Endothelial cell of umbilical vein (primary cell): ENCODE measurements at regions of chr2 and their contacts with region 1.

Region 1: DNA sequence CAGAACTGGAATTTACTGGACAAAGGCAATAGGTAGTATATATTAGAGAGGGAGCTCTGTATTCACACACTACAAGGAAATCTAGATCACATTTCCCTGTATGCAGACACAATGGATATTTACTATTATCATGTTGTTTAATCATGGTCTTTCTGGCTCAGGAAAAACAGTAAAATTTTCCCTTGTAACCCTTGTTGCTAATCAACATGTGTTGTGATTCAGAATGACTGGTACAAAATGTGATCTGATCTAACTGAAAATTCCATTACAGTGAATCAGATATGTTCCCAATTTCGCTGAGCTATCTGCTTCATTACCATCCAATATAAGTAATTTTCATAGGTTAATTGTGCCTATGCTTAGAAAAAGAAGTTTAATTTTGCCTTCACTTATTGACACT is 1109.7 kb downstream of the LRP1B start:
- DNase-seq: peak; percentile 88
- H3K4me3 ChIP-seq: no peak overlapping the region
- H3K27ac ChIP-seq: peak overlapping the region; percentile 90
- H3K4me1 ChIP-seq: peaks cover 29% of the 10 kb centered on the region
- H3K27me3 ChIP-seq: no peaks in the 10 kb centered on the region
- CTCF ChIP-seq: no peak
- POLR2A ChIP-seq: no peak

Region 2: GRCh38 chr2:140657657-140658056 is 363.5 kb before region 1 on chr2:
- CTCF ChIA-PET with region 1: no interaction called
- POLR2A ChIA-PET with region 1: no interaction called
- dilution Hi-C with region 1: no loop called
- intact Hi-C with region 1: loop called (anchors 1 kb)
- DNase-seq: peak; percentile 68
- H3K4me3 ChIP-seq: no peak overlapping the region
- H3K27ac ChIP-seq: peak overlapping the region; percentile 48
- H3K4me1 ChIP-seq: peaks cover 21% of the 10 kb centered on the region
- H3K27me3 ChIP-seq: no peaks in the 10 kb centered on the region
- CTCF ChIP-seq: no peak
- POLR2A ChIP-seq: peak; percentile 21

Region 3: GRCh38 chr2:140998017-140998416 is 23.1 kb before region 1 on chr2:
- CTCF ChIA-PET with region 1: no interaction called
- POLR2A ChIA-PET with region 1: no interaction called
- dilution Hi-C with region 1: no loop called
- intact Hi-C with region 1: no loop called
- DNase-seq: no peak
- H3K4me3 ChIP-seq: no peak overlapping the region
- H3K27ac ChIP-seq: no peak overlapping the region
- H3K4me1 ChIP-seq: no peaks in the 10 kb centered on the region
- H3K27me3 ChIP-seq: no peaks in the 10 kb centered on the region
- CTCF ChIP-seq: no peak
- POLR2A ChIP-seq: no peak

Region 4: DNA sequence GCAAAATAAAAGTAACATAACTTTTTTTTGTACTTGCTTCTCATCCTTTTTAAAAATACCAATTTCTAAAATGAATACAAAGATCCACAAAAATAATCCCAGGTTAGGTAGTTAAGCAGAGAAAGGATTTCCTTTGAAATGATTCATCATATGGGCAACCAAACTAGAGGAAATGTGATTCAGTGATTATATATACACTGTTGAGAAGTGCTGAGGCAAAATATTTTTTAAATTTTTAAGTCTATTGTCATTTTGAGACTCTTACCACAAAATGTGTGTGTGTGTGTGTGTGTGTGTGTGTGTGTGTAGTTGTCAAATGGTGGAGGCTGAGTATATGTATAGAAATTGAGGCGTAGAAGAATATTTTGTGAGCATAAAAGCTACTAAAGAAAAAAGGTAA is 34.4 kb after region 1 on chr2:
- CTCF ChIA-PET with region 1: no interaction called
- POLR2A ChIA-PET with region 1: no interaction called
- dilution Hi-C with region 1: no loop called
- intact Hi-C with region 1: loop called (anchors 1 kb)
- DNase-seq: peak; percentile 77
- H3K4me3 ChIP-seq: no peak overlapping the region
- H3K27ac ChIP-seq: peak overlapping the region; percentile 43
- H3K4me1 ChIP-seq: peaks cover 13% of the 10 kb centered on the region
- H3K27me3 ChIP-seq: no peaks in the 10 kb centered on the region
- CTCF ChIP-seq: no peak
- POLR2A ChIP-seq: no peak

Region 5: GRCh38 chr2:141392517-141393213 is 371.6 kb after region 1 on chr2:
- CTCF ChIA-PET with region 1: no interaction called
- POLR2A ChIA-PET with region 1: no interaction called
- dilution Hi-C with region 1: no loop called
- intact Hi-C with region 1: loop called (anchors 1 kb)
- DNase-seq: peak; percentile 62
- H3K4me3 ChIP-seq: no peak overlapping the region
- H3K27ac ChIP-seq: peak overlapping the region; percentile 88
- H3K4me1 ChIP-seq: peaks cover 16% of the 10 kb centered on the region
- H3K27me3 ChIP-seq: no peaks in the 10 kb centered on the region
- CTCF ChIP-seq: no peak
- POLR2A ChIP-seq: no peak

Region 6: DNA sequence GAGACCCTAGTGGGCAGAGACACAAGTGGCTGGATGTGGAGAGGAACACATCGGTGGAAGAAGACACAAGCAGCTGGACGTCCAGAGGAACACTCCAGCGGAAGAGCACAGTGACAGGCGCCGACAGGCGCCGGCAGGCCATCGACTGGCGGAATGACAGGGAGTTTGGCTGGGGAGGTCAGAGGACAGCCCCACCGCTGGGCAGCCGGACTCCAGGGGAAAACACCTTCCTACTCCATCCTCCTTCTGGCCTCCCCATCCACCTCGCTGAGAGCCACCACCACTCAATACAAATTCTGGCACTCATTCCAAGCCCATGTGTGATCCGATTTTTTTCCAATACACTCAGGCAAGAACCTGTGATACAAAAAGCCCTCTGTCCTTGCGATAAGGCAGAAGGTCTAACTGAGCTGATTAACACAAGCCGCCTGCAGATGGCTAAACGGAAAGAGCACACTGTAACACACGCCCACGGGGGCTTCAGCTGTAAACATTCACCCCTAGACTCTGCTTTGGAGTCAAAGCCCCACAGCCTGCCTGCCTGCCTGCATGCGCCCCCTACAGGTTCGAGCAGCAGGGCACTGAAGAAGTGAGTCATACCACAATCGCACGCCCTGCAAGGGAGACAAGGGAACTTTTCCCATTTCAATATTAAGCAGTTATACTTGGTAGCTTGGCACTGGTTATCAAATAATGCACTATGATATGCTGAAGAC is 1159.9 kb after region 1 on chr2:
- CTCF ChIA-PET with region 1: no interaction called
- POLR2A ChIA-PET with region 1: no interaction called
- dilution Hi-C with region 1: no loop called
- intact Hi-C with region 1: loop called (anchors 1 kb)
- DNase-seq: peak; percentile 58
- H3K4me3 ChIP-seq: no peak overlapping the region
- H3K27ac ChIP-seq: no peak overlapping the region
- H3K4me1 ChIP-seq: peaks cover 10% of the 10 kb centered on the region
- H3K27me3 ChIP-seq: no peaks in the 10 kb centered on the region
- CTCF ChIP-seq: peak; percentile 66 to 71
- POLR2A ChIP-seq: no peak